ENCODE measurements at regions of chr3 and their contacts with region 1.

Region 1: DNA sequence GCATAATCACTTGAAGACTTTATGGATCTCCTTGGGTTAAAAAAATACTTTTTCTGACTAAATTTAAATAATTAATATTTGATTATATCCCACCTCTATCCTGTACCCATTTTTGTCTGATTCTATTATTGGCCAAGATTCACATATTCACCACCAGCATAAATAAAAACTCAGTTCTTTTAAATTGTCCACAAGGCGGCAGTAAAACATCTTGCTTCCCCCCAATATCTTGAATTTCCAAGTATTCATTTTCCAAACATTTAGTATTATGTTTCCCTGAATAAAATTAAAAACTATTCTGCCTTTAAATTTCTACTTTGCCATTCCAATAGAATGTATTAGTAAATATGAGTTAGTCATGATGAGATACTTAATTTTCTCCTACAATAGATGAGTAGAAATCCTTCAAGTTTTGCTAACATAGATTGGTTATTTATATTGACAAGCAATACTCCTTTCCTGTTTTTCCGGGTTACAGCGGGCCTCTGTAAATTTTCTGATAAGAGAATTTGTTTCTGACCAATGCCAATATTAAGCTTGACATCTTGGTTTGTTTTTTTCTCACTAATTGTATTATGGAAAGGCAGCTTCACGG is 218.7 kb upstream of the MDFIC2 start:
- DNase-seq: peak; percentile 43
- H3K4me3 ChIP-seq: no peak overlapping the region
- CTCF ChIP-seq: peak; percentile 44

Region 2: DNA sequence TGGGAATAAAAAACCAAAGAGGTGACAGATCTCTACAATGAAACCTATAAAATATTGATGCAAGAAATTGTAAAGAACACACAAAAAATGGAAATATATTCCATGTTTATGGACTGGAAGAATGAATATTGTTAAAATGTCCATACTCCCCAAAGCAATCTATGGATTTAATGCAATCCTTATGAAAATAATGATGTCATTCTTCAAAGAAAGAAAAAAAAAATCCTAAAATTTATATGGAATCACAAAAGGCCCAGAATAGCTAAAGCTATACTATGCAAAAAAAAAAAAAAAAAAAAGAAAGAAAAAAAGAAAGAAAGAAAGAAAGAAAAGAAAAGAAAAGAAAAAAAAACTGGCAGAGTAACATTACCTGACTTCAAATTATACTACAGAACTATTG is 74.2 kb before region 1 on chr3:
- in situ Hi-C with region 1: no loop called
- DNase-seq: no peak
- H3K4me3 ChIP-seq: no peak overlapping the region
- CTCF ChIP-seq: no peak

Region 3: GRCh38 chr3:70716832-70717231 is 185.7 kb after region 1 on chr3:
- in situ Hi-C with region 1: loop called (anchors 25 kb)
- DNase-seq: peak; percentile 23
- H3K4me3 ChIP-seq: no peak overlapping the region
- CTCF ChIP-seq: peak; percentile 51

Region 4: DNA sequence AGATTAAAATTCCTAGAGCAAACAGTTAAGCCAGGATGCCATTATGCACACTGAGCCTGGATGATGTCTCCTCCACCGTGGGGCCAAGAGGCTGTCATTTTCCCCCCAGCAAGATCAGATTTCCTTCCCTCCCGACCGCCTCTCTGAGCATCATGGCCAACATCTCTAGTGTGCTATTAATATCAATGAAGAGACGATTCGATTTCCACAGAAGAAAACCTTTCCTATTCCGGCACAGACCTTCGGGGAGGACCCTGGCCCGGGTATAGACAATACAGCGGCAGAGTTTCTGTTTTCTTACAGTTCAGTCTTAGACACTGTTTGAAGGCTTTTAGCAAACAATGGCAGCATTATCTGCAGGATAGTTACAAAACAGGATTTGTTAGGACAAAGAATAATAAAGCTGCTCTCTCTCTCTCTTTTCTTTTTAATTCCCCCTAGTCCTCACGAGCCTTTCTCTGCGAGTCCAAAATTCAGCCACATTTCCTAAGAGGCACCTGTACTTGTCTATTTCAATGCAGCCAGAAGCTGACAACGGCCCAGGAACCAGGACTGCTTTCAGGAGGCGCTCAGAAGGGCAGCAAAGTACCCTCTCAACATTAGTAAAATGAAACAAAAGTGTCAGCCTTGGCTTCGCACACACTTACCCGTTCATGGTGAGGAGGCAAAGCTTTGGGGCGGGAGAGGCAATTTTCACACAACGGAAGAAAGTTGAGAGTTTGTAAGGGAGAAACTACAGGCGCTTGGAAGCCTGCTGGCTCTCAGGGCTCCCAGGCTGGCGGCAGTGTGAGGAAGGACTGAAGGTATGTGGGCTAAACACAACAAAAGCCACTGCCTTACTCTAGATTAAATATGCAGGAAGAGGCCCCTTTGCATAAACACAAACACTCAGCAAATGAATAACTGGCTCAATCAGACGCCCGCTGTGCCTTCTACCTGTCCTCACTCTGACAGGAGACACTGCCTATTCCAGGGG is 774.4 kb after region 1 on chr3:
- in situ Hi-C with region 1: loop called (anchors 25 kb)
- DNase-seq: peak; percentile 11
- H3K4me3 ChIP-seq: peak overlapping the region; percentile 33
- CTCF ChIP-seq: no peak